Activated CD4-positive, alpha-beta T cell treated with anti-CD3 and anti-CD28 coated beads for 36 hours (primary cell): ENCODE measurements at regions of chr1 and their contacts with region 1.

Region 1: GRCh38 chr1:247156787-247157232 is 15.0 kb downstream of the ZNF124 start:
- DNase-seq: no peak
- ATAC-seq: no peak
- H3K4me3 Mint-ChIP-seq: no peak overlapping the region
- H3K27ac Mint-ChIP-seq: no peak overlapping the region
- H3K4me1 Mint-ChIP-seq: no peaks in the 10 kb centered on the region
- H3K27me3 Mint-ChIP-seq: no peaks in the 10 kb centered on the region

Region 2: DNA sequence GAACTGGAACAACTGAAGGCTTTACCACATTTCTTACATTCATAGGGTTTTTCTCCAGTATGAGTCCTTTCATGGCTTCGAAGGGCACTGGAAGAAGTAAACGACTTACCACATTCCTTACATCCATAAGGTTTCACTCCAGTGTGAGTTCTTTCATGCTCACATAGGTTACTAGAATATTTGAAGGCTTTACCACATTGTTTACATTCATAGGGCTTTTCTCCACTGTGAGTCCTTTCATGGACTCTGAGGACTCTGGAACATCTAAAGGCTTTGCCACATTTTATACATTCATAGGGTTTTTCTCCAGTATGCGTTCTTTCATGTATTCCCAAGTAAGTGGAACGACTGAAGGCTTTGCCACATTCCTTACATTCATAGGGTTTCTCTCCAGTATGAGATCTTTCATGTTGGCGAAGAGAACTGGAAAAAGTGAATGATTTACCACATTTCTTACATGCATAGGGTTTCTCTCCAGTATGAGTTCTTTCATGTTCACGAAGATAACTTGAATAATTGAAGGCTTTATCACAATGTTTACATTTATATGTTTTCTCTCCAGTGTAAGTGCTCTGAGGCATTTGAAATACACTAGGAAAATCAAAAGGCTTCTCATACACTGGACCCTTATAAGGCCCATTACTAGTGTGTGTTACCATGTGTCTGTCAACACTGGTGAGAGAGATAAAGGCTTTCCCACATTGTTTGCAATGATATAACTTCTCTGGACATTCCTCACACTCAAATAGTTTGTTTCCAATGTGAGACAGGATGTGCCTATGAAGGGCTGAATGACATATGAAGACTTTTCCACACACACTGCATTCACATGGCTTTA is 119.1 kb before region 1 on chr1:
- CTCF ChIA-PET with region 1: no interaction called
- POLR2A ChIA-PET with region 1: no interaction called
- intact Hi-C with region 1: loop called in 1 of 2 experiments (anchors 5 kb)
- DNase-seq: no peak
- ATAC-seq: no peak
- H3K4me3 Mint-ChIP-seq: no peak overlapping the region
- H3K27ac Mint-ChIP-seq: no peak overlapping the region
- H3K4me1 Mint-ChIP-seq: no peaks in the 10 kb centered on the region
- H3K27me3 Mint-ChIP-seq: no peaks in the 10 kb centered on the region

Region 3: DNA sequence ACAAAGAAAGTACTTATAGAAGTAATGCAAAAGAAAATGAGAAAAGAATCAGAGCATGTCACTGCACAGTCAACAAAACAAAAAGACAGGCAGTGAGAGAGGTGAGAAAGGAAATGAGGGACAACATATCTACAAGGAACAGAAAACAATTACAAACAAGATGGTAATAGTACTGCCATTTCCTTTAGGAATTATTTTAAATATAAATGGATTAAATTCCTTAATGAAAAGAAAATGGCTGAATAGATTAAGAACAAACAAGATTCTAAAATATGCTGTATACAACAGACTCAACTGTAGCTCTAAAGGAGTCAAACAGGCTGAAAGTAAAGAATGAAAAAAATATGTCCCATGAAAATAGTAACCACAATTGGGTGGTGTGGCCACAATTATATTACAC is 37.1 kb after region 1 on chr1:
- CTCF ChIA-PET with region 1: no interaction called
- POLR2A ChIA-PET with region 1: no interaction called
- intact Hi-C with region 1: loop called in 1 of 2 experiments (anchors 2 kb)
- DNase-seq: no peak
- ATAC-seq: no peak
- H3K4me3 Mint-ChIP-seq: no peak overlapping the region
- H3K27ac Mint-ChIP-seq: no peak overlapping the region
- H3K4me1 Mint-ChIP-seq: no peaks in the 10 kb centered on the region
- H3K27me3 Mint-ChIP-seq: no peaks in the 10 kb centered on the region